WTC11 (cell line): ENCODE measurements at regions of chr6 and their contacts with region 1.

Region 1: GRCh38 chr6:29696155-29697125 is 15.5 kb upstream of the ZFP57 start:
- DNase-seq: peak; percentile 57
- ATAC-seq: peak; percentile 86
- H3K4me3 Mint-ChIP-seq: no peak overlapping the region
- H3K27ac Mint-ChIP-seq: no peak overlapping the region
- H3K4me1 Mint-ChIP-seq: peaks cover 15% of the 10 kb centered on the region
- H3K27me3 Mint-ChIP-seq: no peaks in the 10 kb centered on the region; the same call in none of the 2 replicates
- CTCF ChIP-seq: no peak

Region 2: DNA sequence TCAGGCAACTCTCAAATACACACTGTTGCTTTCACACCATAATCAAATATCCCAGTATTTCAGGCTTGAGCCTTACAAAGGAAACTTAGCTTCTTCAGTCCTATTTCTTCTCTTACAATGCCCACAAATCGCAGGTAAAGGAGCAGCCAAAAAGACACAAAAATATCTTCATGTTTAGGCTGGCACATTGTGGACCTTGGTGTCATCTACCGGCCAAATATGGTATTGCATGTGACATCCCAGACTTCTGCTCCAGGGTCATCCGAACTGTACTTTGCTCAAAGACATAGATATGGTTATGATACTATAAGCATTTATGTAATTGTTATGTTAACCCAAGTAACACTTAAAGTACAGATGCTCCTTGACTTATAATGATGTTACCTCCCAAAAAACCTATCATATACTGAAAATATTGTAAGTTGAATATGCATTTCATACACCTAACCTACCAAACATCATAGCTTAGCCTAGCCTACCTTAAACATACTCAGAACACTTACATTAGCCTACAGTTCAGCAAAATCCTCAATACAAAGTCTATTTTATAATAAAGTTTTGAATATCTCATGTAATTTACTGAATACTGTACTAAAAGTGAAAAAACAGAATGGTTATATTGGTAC is 106.9 kb before region 1 on chr6:
- CTCF ChIA-PET with region 1: no interaction called
- POLR2A ChIA-PET with region 1: no interaction called
- DNase-seq: peak; percentile 53
- ATAC-seq: peak; percentile 50
- H3K4me3 Mint-ChIP-seq: no peak overlapping the region
- H3K27ac Mint-ChIP-seq: no peak overlapping the region
- H3K4me1 Mint-ChIP-seq: peaks cover 5% of the 10 kb centered on the region
- H3K27me3 Mint-ChIP-seq: no peaks in the 10 kb centered on the region
- CTCF ChIP-seq: peak; percentile 98

Region 3: DNA sequence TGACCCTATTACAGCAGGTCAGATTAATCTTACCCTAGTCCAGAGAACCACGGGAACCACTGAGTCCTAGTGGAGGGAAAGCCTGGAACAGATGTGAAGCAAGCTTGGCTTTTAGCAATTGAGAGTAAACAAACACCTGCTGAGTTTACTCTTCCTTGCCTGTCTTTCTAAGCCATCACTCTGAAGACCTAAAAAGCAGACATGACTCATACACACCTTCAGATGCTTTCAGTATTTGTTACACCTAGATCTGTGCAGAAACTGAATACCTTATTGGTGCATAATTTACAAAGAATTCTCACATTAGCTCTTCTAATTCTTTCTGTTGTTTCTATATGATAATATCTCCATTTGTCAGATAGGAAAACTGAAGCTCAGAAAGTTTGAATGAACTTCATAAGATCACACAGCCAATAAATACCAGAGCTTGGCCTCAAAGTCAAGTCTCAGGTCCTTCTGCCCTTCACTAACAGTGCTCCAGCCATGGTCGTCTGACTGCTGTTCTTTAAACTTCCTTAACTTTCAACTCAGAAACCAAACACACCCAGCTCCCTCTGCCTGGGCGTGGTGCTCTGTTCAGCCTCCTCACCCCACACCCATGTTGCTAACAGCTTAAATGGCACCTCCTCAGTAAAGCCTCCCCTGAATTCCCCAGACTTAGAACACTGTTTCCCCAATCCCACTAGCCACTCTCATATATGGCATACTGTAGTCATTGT is 54.9 kb before region 1 on chr6:
- CTCF ChIA-PET with region 1: interaction called, 531 read pairs
- POLR2A ChIA-PET with region 1: no interaction called
- DNase-seq: no peak
- ATAC-seq: peak; percentile 65
- H3K4me3 Mint-ChIP-seq: no peak overlapping the region
- H3K27ac Mint-ChIP-seq: no peak overlapping the region
- H3K4me1 Mint-ChIP-seq: peaks cover 25% of the 10 kb centered on the region
- H3K27me3 Mint-ChIP-seq: no peaks in the 10 kb centered on the region
- CTCF ChIP-seq: no peak

Region 4: GRCh38 chr6:29665942-29666825 is 30.3 kb before region 1 on chr6:
- CTCF ChIA-PET with region 1: interaction called, 31 read pairs
- POLR2A ChIA-PET with region 1: no interaction called
- DNase-seq: no peak
- ATAC-seq: peak; percentile 13
- H3K4me3 Mint-ChIP-seq: peak overlapping the region; percentile 14
- H3K27ac Mint-ChIP-seq: peak overlapping the region; percentile 99
- H3K4me1 Mint-ChIP-seq: peaks cover 73% of the 10 kb centered on the region
- H3K27me3 Mint-ChIP-seq: peaks cover 23% of the 10 kb centered on the region
- CTCF ChIP-seq: no peak

Region 5: GRCh38 chr6:29737707-29738630 is 41.5 kb after region 1 on chr6:
- CTCF ChIA-PET with region 1: interaction called, 11 read pairs
- POLR2A ChIA-PET with region 1: no interaction called
- DNase-seq: peak; percentile 81
- ATAC-seq: peak; percentile 97
- H3K4me3 Mint-ChIP-seq: no peak overlapping the region
- H3K27ac Mint-ChIP-seq: no peak overlapping the region
- H3K4me1 Mint-ChIP-seq: no peaks in the 10 kb centered on the region
- H3K27me3 Mint-ChIP-seq: peaks cover 18% of the 10 kb centered on the region
- CTCF ChIP-seq: peak; percentile 67

Region 6: DNA sequence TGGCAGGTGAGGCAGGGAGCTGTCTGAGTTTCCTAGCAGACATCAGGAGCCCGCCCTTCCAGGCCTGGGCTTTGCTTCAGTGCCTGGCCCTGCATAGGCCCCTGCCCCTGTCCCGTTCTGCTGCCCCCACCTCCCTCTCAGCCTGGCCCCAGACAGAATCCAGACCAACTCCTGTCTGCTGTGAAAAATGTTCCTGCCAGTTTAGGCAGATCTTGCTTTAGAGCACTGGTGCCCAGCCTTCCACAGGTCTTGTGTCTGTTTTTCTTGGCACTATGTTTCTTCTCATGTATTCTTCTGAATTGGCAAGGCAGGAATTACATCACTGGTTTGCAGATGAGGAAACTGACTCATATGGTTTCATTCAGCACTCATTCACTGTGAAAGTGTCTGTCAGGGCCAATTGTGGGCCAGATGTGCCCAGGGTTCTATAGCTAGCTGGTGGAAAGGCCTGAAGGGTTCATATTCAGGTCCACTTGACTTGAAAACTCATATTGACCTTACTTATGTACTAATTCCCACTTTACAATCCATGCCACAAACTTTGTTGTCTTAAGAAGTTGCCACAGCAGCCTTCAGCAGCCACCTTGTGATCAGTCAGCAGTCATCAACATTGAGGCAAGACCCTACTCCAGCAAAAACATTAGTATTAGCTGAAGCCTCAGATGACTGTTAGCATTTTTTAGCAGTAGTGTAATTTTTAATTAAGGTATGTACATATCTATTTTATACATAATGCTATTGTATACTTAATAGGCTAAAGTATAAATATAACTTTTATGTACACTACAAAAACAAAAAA is 67.2 kb after region 1 on chr6:
- CTCF ChIA-PET with region 1: interaction called, 20 read pairs
- POLR2A ChIA-PET with region 1: no interaction called
- DNase-seq: no peak
- ATAC-seq: no peak
- H3K4me3 Mint-ChIP-seq: no peak overlapping the region
- H3K27ac Mint-ChIP-seq: no peak overlapping the region
- H3K4me1 Mint-ChIP-seq: peaks cover 27% of the 10 kb centered on the region
- H3K27me3 Mint-ChIP-seq: peaks cover 22% of the 10 kb centered on the region
- CTCF ChIP-seq: no peak

Region 7: GRCh38 chr6:29813809-29814208 is 117.4 kb after region 1 on chr6:
- CTCF ChIA-PET with region 1: no interaction called
- POLR2A ChIA-PET with region 1: no interaction called
- DNase-seq: no peak
- ATAC-seq: peak; percentile 65
- H3K4me3 Mint-ChIP-seq: no peak overlapping the region
- H3K27ac Mint-ChIP-seq: no peak overlapping the region
- H3K4me1 Mint-ChIP-seq: no peaks in the 10 kb centered on the region
- H3K27me3 Mint-ChIP-seq: peaks cover 9% of the 10 kb centered on the region; the same call in 1 of the 2 replicates
- CTCF ChIP-seq: no peak